Activated CD4-positive, alpha-beta T cell treated with anti-CD3 and anti-CD28 coated beads for 36 hours (primary cell): ENCODE measurements at regions of chr2 and their contacts with region 1.

Region 1: DNA sequence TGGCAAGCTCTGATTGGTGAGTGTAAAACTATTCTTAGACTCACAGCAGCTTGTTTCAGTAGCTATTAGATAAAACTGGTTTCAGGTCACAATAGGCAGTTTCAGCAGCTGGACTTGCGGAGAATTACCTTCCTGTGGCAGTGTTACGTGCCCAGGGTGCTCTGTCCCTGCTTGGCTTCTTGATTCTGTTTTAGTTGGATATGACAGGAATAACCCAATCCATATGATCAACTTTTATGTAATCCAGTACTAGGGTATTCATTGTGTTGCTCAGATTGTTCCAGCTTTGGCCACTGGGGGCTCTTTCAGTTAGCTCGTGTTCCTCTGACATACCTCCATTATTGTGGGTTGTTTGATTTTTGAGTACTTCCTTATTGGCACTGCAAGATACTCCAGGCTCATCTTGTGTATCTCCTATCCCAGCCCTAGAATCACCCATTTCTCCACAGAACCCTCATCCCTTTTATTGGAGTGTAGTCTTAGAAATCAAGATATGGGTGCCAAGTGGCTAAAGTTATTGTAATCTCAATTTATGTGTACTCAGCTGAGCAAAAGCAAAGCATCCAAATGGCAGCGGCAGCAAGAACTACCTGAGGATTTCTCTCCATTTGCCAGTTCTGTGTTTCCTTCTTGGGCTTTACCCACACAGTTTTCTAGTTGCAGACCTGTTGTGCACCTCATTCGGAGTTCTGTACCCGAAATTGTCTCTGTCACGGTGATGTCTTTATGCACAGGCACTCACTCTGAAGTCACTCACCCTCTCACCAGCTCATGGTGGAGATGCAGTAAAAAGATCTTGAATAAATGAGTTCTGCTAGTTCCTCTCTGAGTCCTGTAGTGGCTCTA is 43.4 kb downstream of the INPP4A start:
- DNase-seq: peak; percentile 70
- ATAC-seq: peak; percentile 62
- H3K4me3 Mint-ChIP-seq: no peak overlapping the region
- H3K27ac Mint-ChIP-seq: peak overlapping the region; percentile 11
- H3K4me1 Mint-ChIP-seq: peaks cover 85% of the 10 kb centered on the region
- H3K27me3 Mint-ChIP-seq: no peaks in the 10 kb centered on the region

Region 2: DNA sequence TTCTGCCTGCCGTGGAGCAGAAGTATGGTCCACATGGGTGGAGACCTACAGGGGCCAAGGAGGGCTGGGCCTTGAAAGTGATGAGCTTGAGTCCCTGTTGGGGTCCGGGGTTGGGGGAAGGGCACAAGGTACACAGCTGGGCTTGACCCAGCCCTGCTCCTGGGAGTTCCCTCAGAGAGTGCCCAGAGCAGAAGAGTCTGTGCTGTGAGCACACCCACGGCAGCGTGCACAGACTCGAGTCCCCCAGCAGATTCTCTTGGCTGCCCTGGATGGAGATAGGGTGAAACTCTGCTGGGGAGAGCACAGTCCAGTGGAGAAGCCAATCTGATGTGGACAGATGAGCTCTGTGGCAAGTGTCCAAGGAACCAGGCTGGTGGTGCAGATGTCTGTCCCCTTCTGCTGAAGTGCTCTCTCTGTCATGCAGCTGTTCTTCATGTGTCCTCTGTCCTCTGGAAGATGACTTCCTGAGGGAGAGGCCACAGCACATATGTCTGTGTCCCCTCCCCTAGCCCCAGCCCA is 15.8 kb before region 1 on chr2:
- CTCF ChIA-PET with region 1: interaction called, 33 read pairs
- POLR2A ChIA-PET with region 1: interaction called, 4 read pairs
- intact Hi-C with region 1: no loop called
- DNase-seq: no peak
- ATAC-seq: no peak
- H3K4me3 Mint-ChIP-seq: no peak overlapping the region
- H3K27ac Mint-ChIP-seq: peak overlapping the region; percentile 63
- H3K4me1 Mint-ChIP-seq: peaks cover 96% of the 10 kb centered on the region
- H3K27me3 Mint-ChIP-seq: no peaks in the 10 kb centered on the region

Region 3: DNA sequence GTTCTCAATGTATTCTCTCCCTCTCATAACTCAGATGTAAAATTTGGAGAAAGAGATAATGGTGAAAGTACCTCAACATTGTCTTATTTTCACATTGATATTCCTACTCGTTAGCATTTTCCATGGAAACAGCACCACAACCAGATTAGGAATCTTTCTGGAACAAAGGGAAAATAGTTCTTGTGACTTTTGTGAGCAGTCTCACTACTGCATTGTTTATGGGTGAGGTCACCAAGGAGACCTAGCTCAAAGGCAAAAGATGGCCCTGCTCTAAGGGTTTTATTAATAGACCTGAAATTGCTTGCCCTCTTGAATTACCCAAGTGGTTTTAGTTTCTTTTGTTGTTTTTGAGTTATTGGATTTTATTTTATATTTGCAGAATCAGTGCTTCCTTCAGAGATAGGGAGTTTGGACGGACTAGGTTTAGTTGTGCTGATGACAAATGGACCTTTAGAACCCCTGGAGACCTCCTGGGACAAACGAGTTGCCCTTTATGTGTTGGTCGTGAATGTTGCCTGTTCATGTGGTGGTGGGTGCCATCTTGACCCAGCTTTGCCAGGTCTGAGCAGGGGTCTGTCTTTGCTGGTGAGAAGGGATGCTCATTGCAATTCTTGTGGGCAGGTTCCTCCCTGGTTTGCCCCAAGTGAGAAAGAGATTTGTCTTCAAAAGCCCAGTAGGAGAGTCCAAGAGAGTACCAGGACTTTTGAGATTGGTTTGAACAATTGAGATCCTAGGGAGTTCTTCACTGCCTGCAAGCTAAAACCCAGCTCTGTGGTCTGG is 14.7 kb after region 1 on chr2:
- CTCF ChIA-PET with region 1: interaction called, 23 read pairs
- POLR2A ChIA-PET with region 1: no interaction called
- intact Hi-C with region 1: no loop called
- DNase-seq: no peak
- ATAC-seq: no peak
- H3K4me3 Mint-ChIP-seq: no peak overlapping the region
- H3K27ac Mint-ChIP-seq: no peak overlapping the region
- H3K4me1 Mint-ChIP-seq: peaks cover 78% of the 10 kb centered on the region
- H3K27me3 Mint-ChIP-seq: no peaks in the 10 kb centered on the region

Region 4: GRCh38 chr2:98508709-98509066 is 20.7 kb after region 1 on chr2:
- CTCF ChIA-PET with region 1: interaction called, 23 read pairs
- POLR2A ChIA-PET with region 1: no interaction called
- intact Hi-C with region 1: no loop called
- DNase-seq: peak; percentile 73
- ATAC-seq: peak; percentile 72
- H3K4me3 Mint-ChIP-seq: no peak overlapping the region
- H3K27ac Mint-ChIP-seq: peak overlapping the region; percentile 84
- H3K4me1 Mint-ChIP-seq: peaks cover 96% of the 10 kb centered on the region
- H3K27me3 Mint-ChIP-seq: no peaks in the 10 kb centered on the region

Region 5: DNA sequence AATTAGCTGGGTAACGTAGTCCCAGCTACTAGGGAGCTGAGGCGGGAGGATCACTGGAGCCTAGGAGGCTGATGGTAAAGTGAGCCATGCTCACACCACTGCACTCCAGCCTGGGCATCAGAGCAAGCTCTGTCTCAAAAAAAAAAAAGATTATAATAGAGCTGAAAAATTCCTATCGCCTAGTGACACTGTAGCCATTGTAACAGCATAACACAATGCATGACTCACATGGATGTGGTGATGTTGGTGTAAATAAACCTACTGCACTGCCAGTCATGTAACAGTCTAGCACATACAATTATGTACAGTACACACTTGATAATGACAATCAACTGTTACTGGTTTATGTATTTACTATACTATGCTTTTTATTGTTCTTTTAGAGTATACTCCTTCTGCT is 203.3 kb after region 1 on chr2:
- CTCF ChIA-PET with region 1: no interaction called
- POLR2A ChIA-PET with region 1: no interaction called
- intact Hi-C with region 1: no loop called
- DNase-seq: no peak
- ATAC-seq: peak; percentile 43
- H3K4me3 Mint-ChIP-seq: peak overlapping the region; percentile 20
- H3K27ac Mint-ChIP-seq: peak overlapping the region; percentile 96
- H3K4me1 Mint-ChIP-seq: peaks cover 86% of the 10 kb centered on the region
- H3K27me3 Mint-ChIP-seq: no peaks in the 10 kb centered on the region

Region 6: DNA sequence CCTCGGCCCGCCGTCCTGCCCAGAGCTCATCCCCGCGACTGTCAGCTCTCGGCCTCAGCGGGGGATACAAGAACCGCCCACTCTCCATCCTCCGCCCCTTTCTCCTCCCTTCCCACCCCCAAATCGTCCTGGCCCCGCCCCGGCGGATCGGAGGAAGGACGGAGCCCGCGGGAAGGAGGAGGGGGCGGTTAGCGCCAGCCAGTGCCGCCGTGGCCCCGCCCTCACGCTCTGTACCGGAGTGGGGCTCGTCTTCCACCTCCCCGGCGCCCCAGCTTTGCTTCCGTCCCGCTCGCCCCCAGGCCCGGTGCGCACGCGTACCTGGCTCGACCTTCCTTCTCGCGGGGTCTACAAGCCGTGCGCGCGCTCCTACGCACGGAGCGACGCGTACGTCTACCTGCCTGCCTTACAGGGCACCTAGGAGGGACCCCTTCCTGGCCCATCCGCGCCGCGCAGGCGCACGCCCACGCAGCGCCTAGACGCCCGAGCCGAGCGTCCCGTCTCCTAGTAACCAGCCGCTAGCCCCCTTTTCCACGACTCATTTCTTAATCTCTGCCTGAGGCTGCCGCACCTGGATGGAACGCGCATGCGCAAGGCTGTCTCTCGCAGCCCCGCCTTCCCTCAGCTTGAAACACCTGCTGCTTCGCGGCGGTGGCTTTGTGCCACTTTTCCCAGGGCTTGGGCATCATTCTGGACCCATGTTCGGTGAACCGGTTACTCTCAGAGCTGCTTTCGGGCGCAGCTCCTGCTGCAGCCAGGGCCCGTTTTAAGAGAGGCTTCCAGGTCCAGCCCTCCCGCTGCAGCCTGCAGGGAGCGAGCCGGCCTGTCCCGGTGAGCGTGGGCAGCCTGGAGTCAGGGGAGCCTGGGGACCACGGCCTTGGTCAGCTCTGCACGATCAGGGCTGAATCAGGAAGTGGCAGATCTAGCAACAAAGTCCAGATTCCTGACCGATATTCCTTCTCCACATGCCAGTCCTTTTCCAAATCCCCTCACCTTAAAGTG is 653.4 kb after region 1 on chr2 and contains the start of gene C2orf15:
- CTCF ChIA-PET with region 1: no interaction called
- POLR2A ChIA-PET with region 1: no interaction called
- intact Hi-C with region 1: no loop called
- DNase-seq: peak; percentile 98
- ATAC-seq: peak; percentile 95
- H3K4me3 Mint-ChIP-seq: peak within 1 kb of the TSS; percentile 94
- H3K27ac Mint-ChIP-seq: peak within 1 kb of the TSS; percentile 86
- H3K4me1 Mint-ChIP-seq: peaks cover 16% of the 10 kb centered on the region
- H3K27me3 Mint-ChIP-seq: no peaks in the 10 kb centered on the region
- total RNA-seq, gene C2orf15: 0.87 to 1.1 TPM

Region 7: DNA sequence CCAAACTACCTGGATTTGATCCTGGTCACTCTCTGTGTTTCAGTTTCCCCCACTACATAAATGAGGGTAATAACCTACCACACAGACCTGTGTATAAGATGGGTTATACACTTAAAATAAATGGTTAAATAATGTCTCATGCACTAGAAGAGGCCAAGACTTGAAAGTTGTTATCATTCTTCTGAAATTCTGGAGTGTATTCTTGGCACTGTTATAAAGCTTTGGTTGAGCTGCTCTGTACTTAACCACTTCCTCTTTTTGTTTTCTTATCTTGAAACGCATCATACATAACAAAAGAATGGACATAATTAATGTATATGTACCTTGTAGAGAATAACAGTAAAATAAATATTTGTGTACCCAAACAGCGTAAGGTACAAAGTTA is 1373.3 kb after region 1 on chr2:
- CTCF ChIA-PET with region 1: no interaction called
- POLR2A ChIA-PET with region 1: no interaction called
- intact Hi-C with region 1: no loop called
- DNase-seq: no peak
- ATAC-seq: no peak
- H3K4me3 Mint-ChIP-seq: no peak overlapping the region
- H3K27ac Mint-ChIP-seq: no peak overlapping the region
- H3K4me1 Mint-ChIP-seq: peaks cover 22% of the 10 kb centered on the region
- H3K27me3 Mint-ChIP-seq: no peaks in the 10 kb centered on the region